ENCODE measurements at regions of chr7 and their contacts with region 1.

Region 1: GRCh38 chr7:127730658-127731276 is 78.8 kb downstream of the SND1 start:
- DNase-seq: no peak
- ATAC-seq: no peak
- H3K4me3 ChIP-seq: no peak overlapping the region
- H3K27ac ChIP-seq: no peak overlapping the region
- H3K4me1 ChIP-seq: no peaks in the 10 kb centered on the region
- H3K27me3 ChIP-seq: no peaks in the 10 kb centered on the region
- CTCF ChIP-seq: no peak

Region 2: DNA sequence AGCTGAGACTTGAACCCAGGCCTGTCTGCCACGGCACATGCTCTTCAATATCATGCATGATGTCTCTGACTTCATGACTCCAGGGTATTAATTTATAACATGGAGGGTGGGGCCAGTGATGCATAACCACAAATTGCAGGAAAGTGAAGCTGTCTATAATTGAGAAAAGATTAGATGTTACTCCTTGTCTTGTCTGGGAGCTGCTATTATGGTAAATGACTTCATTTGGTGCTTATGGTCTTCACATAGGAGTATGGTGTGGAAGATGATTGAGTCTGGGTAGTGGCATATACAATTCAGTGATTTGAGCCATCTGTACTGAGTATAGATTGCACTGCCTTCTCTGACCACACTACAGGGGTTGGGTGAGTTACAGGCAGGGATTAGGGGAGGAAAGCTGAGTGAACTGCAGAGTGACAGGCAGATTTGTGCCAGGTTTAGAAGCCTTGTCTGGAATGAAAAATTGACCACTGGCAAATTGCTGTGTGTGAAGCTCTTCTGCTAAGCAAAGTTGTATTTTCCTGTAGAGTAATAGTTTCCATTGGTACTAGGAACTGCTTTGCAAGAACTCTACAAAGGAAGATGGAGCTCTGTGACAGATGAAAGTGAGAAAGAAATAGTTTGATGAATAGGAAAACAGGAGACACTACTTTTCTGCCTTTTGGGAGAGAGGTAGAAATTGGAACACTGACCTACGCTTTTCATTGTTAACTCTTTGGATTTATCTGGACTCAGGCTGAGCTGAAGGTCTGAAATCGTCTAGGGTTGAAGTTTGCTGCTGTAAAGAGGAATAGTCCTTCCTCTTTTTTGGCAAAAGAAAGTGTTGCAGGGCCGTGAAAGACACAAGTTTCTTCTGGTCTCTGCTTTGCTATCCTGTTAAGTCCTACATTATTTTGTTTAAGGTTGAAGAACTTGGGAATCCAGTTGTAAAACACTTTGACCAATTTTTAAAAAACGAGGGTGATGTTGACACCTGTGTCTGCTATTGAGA is 76.1 kb before region 1 on chr7:
- CTCF ChIA-PET with region 1: no interaction called
- POLR2A ChIA-PET with region 1: no interaction called
- in situ Hi-C with region 1: no loop called
- intact Hi-C with region 1: no loop called
- DNase-seq: no peak
- ATAC-seq: no peak
- H3K4me3 ChIP-seq: peak overlapping the region in 1 of 2 experiments; percentile 1; a peak in 2 of 4 replicates
- H3K27ac ChIP-seq: no peak overlapping the region; the same call in 1 of the 2 replicates
- H3K4me1 ChIP-seq: peaks cover 26% of the 10 kb centered on the region
- H3K27me3 ChIP-seq: no peaks in the 10 kb centered on the region
- CTCF ChIP-seq: no peak

Region 3: GRCh38 chr7:127708788-127709187 is 22.0 kb before region 1 on chr7:
- CTCF ChIA-PET with region 1: no interaction called
- POLR2A ChIA-PET with region 1: interaction called, 10 read pairs
- in situ Hi-C with region 1: no loop called
- intact Hi-C with region 1: no loop called
- DNase-seq: peak; percentile 63
- ATAC-seq: peak; percentile 91
- H3K4me3 ChIP-seq: no peak overlapping the region
- H3K27ac ChIP-seq: no peak overlapping the region
- H3K4me1 ChIP-seq: peaks cover 4% of the 10 kb centered on the region
- H3K27me3 ChIP-seq: no peaks in the 10 kb centered on the region
- CTCF ChIP-seq: peak; percentile 75

Region 4: DNA sequence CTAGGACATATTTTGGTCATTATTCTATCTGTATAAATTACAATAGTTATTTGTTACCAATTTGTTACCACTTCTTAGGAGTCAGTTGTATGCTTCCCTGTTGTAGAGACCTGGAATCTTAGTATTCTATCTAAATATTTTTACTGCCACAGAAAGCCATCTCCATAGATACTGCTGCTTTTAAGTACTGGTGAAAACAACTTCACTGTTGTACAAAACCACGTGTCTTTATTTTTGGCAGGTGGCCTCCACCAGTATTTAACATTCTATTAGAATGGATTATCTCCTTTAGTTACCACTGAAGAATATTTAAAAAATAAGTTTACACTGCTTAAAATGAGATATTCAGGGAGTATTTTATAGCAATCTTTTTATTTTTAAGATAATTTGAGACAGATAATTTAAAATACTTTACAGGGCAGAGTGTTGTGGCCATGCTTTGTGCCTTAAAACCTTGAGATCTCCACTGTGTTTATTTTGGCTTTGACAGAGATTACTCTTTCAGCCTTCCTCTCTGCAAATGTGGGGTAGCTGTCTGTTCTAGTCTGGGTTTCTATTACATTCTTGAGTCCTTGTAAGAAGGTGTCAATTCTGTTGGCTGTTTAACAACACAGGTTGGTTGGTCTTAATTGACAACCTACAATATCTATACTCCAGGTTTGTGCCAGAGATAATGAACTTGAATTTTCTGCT is 114.9 kb after region 1 on chr7:
- CTCF ChIA-PET with region 1: no interaction called
- POLR2A ChIA-PET with region 1: no interaction called
- in situ Hi-C with region 1: no loop called
- intact Hi-C with region 1: no loop called
- DNase-seq: no peak
- ATAC-seq: no peak
- H3K4me3 ChIP-seq: no peak overlapping the region
- H3K27ac ChIP-seq: no peak overlapping the region
- H3K4me1 ChIP-seq: no peaks in the 10 kb centered on the region
- H3K27me3 ChIP-seq: no peaks in the 10 kb centered on the region
- CTCF ChIP-seq: no peak

Region 5: DNA sequence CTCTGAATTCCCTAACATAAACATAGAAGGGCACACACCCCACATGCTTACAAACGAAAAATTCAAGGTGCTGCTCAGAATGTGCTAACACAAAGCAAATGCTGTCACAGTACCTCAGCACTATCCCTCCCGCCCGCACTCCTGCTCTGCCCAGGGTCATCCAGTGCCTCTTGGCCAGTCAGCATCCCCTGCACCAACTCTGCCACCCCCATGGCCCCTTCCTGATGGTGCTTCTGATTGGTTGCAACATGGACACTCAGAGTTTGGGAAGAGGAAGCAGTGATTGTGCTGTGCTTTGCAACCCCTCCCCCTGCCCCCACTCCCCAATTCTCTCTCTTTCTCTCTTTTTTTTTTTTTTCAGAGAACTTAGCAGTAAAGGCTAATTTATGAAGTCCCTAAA is 496.5 kb after region 1 on chr7:
- CTCF ChIA-PET with region 1: interaction called, 11 read pairs
- POLR2A ChIA-PET with region 1: no interaction called
- in situ Hi-C with region 1: no loop called
- intact Hi-C with region 1: no loop called
- DNase-seq: no peak
- ATAC-seq: no peak
- H3K4me3 ChIP-seq: no peak overlapping the region
- H3K27ac ChIP-seq: no peak overlapping the region
- H3K4me1 ChIP-seq: no peaks in the 10 kb centered on the region
- H3K27me3 ChIP-seq: peaks cover 3% of the 10 kb centered on the region; the same call in 1 of the 2 replicates
- CTCF ChIP-seq: no peak

Measured in Panc1 (cell line).